Activated T-helper 2 cell treated with anti-CD3 and anti-CD28 coated beads, Interferon-gamma antibody, Interleukin-2, Interleukin-4, amounts not matched to agents 10 μg/mL and 5 μg/mL and 100 μg/mL, durations not matched to agents 14 hours and 24 hours and 36 hours (primary cell): ENCODE measurements at regions of chr1 and their contacts with region 1.

Region 1: GRCh38 chr1:222455188-222455879 is 92.6 kb downstream of the HHIPL2 start:
- DNase-seq: peak; percentile 68
- H3K4me3 Mint-ChIP-seq: no peak overlapping the region
- H3K27ac Mint-ChIP-seq: no peak overlapping the region
- H3K4me1 Mint-ChIP-seq: no peaks in the 10 kb centered on the region
- H3K27me3 Mint-ChIP-seq: peaks cover 5% of the 10 kb centered on the region

Region 2: GRCh38 chr1:220810179-220810653 is 1645.1 kb before region 1 on chr1:
- intact Hi-C with region 1: loop called (anchors 1 kb)
- DNase-seq: peak; percentile 53
- H3K4me3 Mint-ChIP-seq: peak overlapping the region; percentile 30
- H3K27ac Mint-ChIP-seq: no peak overlapping the region
- H3K4me1 Mint-ChIP-seq: peaks cover 5% of the 10 kb centered on the region
- H3K27me3 Mint-ChIP-seq: no peaks in the 10 kb centered on the region

Region 3: GRCh38 chr1:221263831-221264767 is 1191.2 kb before region 1 on chr1:
- intact Hi-C with region 1: loop called (anchors 10 kb)
- DNase-seq: peak; percentile 13
- H3K4me3 Mint-ChIP-seq: no peak overlapping the region
- H3K27ac Mint-ChIP-seq: no peak overlapping the region
- H3K4me1 Mint-ChIP-seq: no peaks in the 10 kb centered on the region
- H3K27me3 Mint-ChIP-seq: no peaks in the 10 kb centered on the region

Region 4: GRCh38 chr1:221543529-221544120 is 911.7 kb before region 1 on chr1:
- intact Hi-C with region 1: loop called (anchors 10 kb)
- DNase-seq: no peak
- H3K4me3 Mint-ChIP-seq: no peak overlapping the region
- H3K27ac Mint-ChIP-seq: no peak overlapping the region
- H3K4me1 Mint-ChIP-seq: peaks cover 2% of the 10 kb centered on the region
- H3K27me3 Mint-ChIP-seq: peaks cover 18% of the 10 kb centered on the region

Region 5: GRCh38 chr1:221907166-221907932 is 548.0 kb before region 1 on chr1:
- intact Hi-C with region 1: no loop called
- DNase-seq: no peak
- H3K4me3 Mint-ChIP-seq: no peak overlapping the region
- H3K27ac Mint-ChIP-seq: no peak overlapping the region
- H3K4me1 Mint-ChIP-seq: peaks cover 12% of the 10 kb centered on the region
- H3K27me3 Mint-ChIP-seq: peaks cover 4% of the 10 kb centered on the region

Region 6: DNA sequence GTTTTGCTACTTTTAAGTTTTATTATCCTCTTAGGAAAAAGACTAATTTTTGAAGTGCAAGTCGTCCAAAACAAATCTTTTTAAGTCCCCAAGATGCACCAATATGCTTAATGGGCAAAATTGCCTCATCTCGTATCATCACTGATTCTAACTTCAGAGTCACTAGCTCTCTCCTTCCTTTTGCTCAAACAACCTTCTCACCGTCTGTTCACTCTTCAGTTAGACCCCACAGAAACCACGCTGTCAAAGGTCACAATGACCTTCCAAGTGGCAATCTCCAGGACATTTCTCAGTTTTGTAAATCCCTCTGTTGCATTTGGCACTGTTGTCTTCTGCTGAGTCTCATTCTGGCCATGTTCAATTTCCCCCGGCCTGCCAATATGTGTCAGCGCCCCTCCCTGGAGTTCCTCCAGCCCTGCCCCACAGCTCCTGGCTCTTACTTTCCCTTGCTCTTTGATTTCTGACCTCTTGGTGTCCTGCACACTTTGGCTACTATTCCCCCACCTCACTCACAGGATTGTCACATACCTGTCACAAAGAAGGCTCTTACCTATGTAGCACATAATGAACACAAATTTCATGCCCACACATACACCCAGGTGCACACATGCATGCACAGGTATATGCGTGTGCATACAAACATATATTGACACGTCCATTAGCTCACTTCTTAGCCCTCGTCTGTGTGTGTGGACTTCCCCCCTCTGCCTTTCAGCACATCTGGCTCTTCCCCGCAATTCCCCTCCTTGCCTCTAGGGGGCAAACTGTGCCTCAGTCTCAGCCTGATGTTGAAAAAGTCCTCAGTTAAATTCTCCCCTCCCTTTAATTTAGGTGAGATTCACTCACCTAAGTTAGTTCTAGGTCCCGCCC is 359.5 kb before region 1 on chr1:
- intact Hi-C with region 1: loop called (anchors 1 kb)
- DNase-seq: peak; percentile 22
- H3K4me3 Mint-ChIP-seq: no peak overlapping the region
- H3K27ac Mint-ChIP-seq: no peak overlapping the region
- H3K4me1 Mint-ChIP-seq: no peaks in the 10 kb centered on the region
- H3K27me3 Mint-ChIP-seq: peaks cover 8% of the 10 kb centered on the region